PC-3 (cell line): ENCODE measurements at regions of chr12 and their contacts with region 1.

Region 1: DNA sequence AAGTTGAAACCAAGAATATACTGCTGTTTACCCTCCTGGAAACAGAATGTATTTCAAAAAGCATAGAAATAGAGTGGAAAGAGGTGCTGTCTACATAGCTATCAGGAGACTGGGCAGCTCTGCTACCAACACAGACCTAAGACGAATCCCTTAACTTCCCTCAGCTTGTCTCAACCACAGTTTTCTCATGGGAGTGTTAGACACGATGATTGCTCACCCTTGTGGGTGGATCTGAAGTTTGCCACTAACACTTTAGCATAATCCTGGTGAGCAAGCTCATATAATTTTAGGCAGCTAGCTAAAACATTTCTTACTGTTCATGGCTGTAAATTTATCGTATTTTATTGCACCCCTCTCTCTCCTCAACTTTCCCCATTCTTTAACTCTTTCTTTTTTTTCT is 38.5 kb downstream of the C12orf75 start:
- DNase-seq: peak; percentile 30
- ATAC-seq: peak; percentile 80
- H3K4me3 ChIP-seq: no peak overlapping the region
- H3K27ac ChIP-seq: no peak overlapping the region
- H3K4me1 ChIP-seq: no peaks in the 10 kb centered on the region
- H3K27me3 ChIP-seq: no peaks in the 10 kb centered on the region
- CTCF ChIP-seq: 0 out of 2 replicates have a peak, but pooled peaks have one; percentile 14

Region 2: GRCh38 chr12:105235732-105236476 is 133.1 kb before region 1 on chr12 and contains the start of gene APPL2:
- CTCF ChIA-PET with region 1: no interaction called
- POLR2A ChIA-PET with region 1: no interaction called
- intact Hi-C with region 1: loop called (anchors 5 kb)
- DNase-seq: peak; percentile 92
- ATAC-seq: peak; percentile 90
- H3K4me3 ChIP-seq: peak within 1 kb of the TSS; percentile 85
- H3K27ac ChIP-seq: peak within 1 kb of the TSS; percentile 60
- H3K4me1 ChIP-seq: peaks cover 26% of the 10 kb centered on the region
- H3K27me3 ChIP-seq: no peaks in the 10 kb centered on the region
- CTCF ChIP-seq: peak; percentile 50
- total RNA-seq, gene APPL2: 36.2 and 42.2 TPM in 2 replicates

Region 3: DNA sequence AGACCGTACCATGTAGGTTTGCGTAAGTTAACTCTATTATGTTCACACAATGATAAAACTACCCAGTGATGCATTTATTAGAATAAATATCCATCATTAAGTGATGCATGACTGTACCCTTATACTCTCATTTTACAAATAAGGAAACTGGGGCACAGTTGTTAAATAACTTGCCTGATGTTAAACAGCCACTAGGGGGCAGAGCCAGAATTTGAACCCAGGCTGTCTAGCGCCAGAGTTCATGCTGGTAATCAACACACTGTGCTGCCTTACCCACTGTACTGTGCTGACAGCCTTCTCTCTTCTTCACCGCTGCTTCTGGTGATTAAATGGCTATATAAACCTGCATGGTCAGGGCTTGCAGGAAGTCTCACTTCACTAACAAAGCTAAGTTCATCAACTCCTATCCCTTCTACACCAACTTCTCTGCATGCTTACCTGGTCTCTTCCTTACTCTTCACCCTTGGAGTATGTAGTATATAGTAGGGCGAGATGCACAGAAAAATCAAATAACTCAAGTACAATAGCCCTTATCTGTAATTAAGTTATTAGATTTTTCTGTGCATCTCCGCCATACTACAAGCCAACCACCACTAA is 89.5 kb before region 1 on chr12:
- CTCF ChIA-PET with region 1: no interaction called
- POLR2A ChIA-PET with region 1: no interaction called
- intact Hi-C with region 1: loop called (anchors 5 kb)
- DNase-seq: no peak
- ATAC-seq: no peak
- H3K4me3 ChIP-seq: no peak overlapping the region
- H3K27ac ChIP-seq: no peak overlapping the region
- H3K4me1 ChIP-seq: peaks cover 14% of the 10 kb centered on the region
- H3K27me3 ChIP-seq: no peaks in the 10 kb centered on the region
- CTCF ChIP-seq: peak; percentile 72

Region 4: GRCh38 chr12:105330283-105330930 is 38.6 kb before region 1 on chr12 and contains the start of gene C12orf75:
- CTCF ChIA-PET with region 1: no interaction called
- POLR2A ChIA-PET with region 1: interaction called, 5 read pairs
- intact Hi-C with region 1: loop called (anchors 5 kb)
- DNase-seq: peak; percentile 91
- ATAC-seq: peak; percentile 84
- H3K4me3 ChIP-seq: peak within 1 kb of the TSS; percentile 86
- H3K27ac ChIP-seq: peak within 1 kb of the TSS; percentile 35; the same call in 1 of the 2 replicates
- H3K4me1 ChIP-seq: peaks cover 42% of the 10 kb centered on the region
- H3K27me3 ChIP-seq: no peaks in the 10 kb centered on the region
- CTCF ChIP-seq: no peak
- total RNA-seq, gene C12orf75: 144 and 160 TPM in 2 replicates

Region 5: GRCh38 chr12:105352940-105353635 is 15.9 kb before region 1 on chr12:
- CTCF ChIA-PET with region 1: interaction called, 10 read pairs
- POLR2A ChIA-PET with region 1: no interaction called
- intact Hi-C with region 1: no loop called
- DNase-seq: peak; percentile 86
- ATAC-seq: peak; percentile 85
- H3K4me3 ChIP-seq: peak overlapping the region; percentile 12; the same call in 1 of the 2 replicates
- H3K27ac ChIP-seq: peak overlapping the region; percentile 26
- H3K4me1 ChIP-seq: peaks cover 37% of the 10 kb centered on the region
- H3K27me3 ChIP-seq: no peaks in the 10 kb centered on the region
- CTCF ChIP-seq: no peak

Region 6: DNA sequence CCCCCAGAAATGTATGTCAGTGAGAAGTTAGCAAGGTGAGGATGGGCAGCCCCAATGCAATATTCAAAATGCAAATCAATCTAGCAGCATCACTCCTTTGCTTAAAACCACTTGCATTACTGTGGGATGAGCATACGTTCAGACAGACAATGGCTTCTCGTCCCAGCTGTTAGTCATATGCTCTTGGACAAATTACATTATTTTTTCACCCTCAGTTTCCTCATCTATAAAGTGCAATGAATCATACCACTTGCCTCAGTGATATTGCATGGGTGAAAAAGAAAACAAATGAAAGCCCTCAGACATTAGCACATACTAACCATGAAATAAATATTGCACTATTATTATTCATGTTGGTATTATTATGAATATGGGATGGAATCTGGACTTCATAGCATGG is 93.8 kb after region 1 on chr12:
- CTCF ChIA-PET with region 1: no interaction called
- POLR2A ChIA-PET with region 1: no interaction called
- intact Hi-C with region 1: no loop called
- DNase-seq: peak; percentile 44
- ATAC-seq: no peak
- H3K4me3 ChIP-seq: no peak overlapping the region
- H3K27ac ChIP-seq: no peak overlapping the region
- H3K4me1 ChIP-seq: peaks cover 8% of the 10 kb centered on the region; the same call in 1 of the 2 replicates
- H3K27me3 ChIP-seq: no peaks in the 10 kb centered on the region
- CTCF ChIP-seq: no peak